GM10248 (cell line): ENCODE measurements at regions of chr5 and their contacts with region 1.

Region 1: GRCh38 chr5:90264689-90265544 is 144.6 kb downstream of the CETN3 start:
- DNase-seq: peak; percentile 13
- CTCF ChIP-seq: peak; percentile 72

Region 2: GRCh38 chr5:90153031-90153430 is 111.9 kb before region 1 on chr5:
- CTCF ChIA-PET with region 1: no interaction called
- POLR2A ChIA-PET with region 1: no interaction called
- DNase-seq: no peak
- CTCF ChIP-seq: no peak

Region 3: DNA sequence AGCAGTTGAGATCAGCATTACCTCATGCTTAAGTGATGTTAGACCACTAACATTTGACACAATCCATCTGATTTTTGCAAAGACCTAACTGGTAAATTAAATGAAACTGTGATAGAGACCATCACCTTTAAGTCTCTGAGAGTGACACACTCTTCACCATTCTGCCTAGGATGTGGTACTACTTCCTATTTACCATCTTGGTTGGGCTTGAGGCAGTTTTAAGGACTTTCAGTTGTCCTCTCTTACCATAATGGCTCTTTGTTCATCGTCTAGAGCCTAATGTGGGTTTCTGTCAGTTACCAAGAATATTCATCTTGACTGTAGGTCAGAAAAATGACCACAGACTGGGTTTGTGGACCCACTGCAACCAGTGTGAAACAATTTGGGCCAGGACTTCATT is 13.5 kb before region 1 on chr5:
- CTCF ChIA-PET with region 1: interaction called, 13 read pairs
- POLR2A ChIA-PET with region 1: no interaction called
- DNase-seq: no peak
- CTCF ChIP-seq: no peak

Region 4: DNA sequence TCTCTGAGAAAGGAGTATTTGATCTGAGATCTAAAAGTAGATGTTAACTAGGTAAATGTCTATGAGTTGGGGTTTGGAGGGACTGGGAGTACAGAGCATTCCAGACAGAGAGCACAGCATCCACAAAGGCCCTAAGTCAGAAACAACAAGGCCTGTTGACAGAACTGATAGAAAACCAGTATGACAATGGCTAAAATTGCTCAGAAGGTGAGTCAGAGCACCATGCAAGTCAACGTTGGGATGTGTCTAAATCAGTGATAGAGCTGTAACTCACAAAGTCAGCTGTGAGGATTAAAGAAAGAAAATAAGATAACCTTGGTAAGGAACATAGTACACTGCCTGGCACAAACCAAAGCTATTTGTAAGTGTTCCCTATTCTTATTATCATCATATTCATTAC is 20.7 kb after region 1 on chr5:
- CTCF ChIA-PET with region 1: interaction called, 10 read pairs
- POLR2A ChIA-PET with region 1: no interaction called
- DNase-seq: no peak
- CTCF ChIP-seq: no peak